ENCODE measurements at regions of chr15 and their contacts with region 1.

Region 1: DNA sequence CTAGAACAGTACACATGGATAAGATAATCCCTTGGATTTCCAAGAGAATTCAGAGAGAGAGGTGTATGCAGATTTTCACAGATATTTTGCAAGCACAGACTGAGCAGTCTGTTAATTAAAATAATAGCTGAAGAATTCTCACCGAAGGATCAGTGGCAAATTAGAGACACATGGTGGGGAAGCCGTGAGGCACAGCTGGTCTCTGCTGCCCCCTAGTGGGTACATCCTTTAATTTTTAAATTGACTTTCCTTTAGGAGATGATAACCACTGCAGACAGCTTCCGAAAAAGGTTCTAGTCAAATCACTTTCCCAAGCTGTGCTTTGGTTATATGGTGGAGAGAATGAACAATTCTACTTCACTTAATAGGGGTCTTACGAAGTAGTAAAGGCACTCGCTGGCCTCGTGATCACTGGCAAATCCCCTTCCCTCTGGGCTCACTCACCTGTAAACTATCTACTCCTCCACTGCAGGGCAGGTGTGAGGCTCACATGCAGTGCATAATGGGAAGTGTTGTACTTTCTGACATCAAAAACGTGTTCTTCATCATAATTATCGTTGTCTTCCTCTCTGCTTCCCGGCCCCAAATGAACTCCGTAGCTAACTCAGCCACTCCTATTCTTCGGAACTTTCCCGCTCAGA is 19.5 kb downstream of the MESD start:
- DNase-seq: no peak
- H3K4me3 ChIP-seq: no peak overlapping the region
- H3K27me3 ChIP-seq: no peaks in the 10 kb centered on the region
- CTCF ChIP-seq: peak; percentile 77

Region 2: GRCh38 chr15:80953936-80954778 is 16.0 kb before region 1 on chr15:
- CTCF ChIA-PET with region 1: interaction called, 51 read pairs
- POLR2A ChIA-PET with region 1: no interaction called
- DNase-seq: no peak
- H3K4me3 ChIP-seq: no peak overlapping the region
- H3K27me3 ChIP-seq: no peaks in the 10 kb centered on the region
- CTCF ChIP-seq: 0 out of 2 replicates have a peak, but pooled peaks have one; percentile 9

Region 3: GRCh38 chr15:80989518-80990478 is 19.7 kb after region 1 on chr15 and contains the start of gene MESD:
- CTCF ChIA-PET with region 1: interaction called, 12 read pairs
- POLR2A ChIA-PET with region 1: no interaction called
- DNase-seq: peak; percentile 65
- H3K4me3 ChIP-seq: peak within 1 kb of the TSS; percentile 65
- H3K27me3 ChIP-seq: no peaks in the 10 kb centered on the region
- CTCF ChIP-seq: no peak
- polyA plus RNA-seq, gene MESD: 11.0 and 17.3 TPM in 2 replicates

Region 4: DNA sequence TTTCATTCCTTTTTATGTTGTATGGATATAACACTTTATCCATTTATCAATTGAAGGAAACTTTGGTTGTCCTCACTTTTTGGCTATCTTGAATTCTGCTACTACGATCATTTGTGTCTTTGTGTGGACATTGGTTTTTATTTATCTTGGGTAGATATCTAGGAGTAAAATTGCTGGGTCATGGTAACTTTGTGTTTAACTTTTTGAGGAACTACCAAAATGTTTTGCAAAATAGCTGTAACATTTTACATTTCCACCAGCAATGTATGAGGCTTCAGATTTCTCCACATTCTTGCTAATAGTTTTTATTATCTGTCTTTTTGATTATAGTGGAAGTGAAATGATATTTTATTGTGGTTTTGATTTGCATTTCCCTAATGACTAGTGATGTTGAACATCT is 86.2 kb after region 1 on chr15:
- CTCF ChIA-PET with region 1: no interaction called
- POLR2A ChIA-PET with region 1: no interaction called
- DNase-seq: no peak
- H3K4me3 ChIP-seq: no peak overlapping the region
- H3K27me3 ChIP-seq: no peaks in the 10 kb centered on the region
- CTCF ChIP-seq: no peak

Region 5: GRCh38 chr15:81106560-81106959 is 136.4 kb after region 1 on chr15:
- CTCF ChIA-PET with region 1: no interaction called
- POLR2A ChIA-PET with region 1: no interaction called
- DNase-seq: peak; percentile 16
- H3K4me3 ChIP-seq: no peak overlapping the region
- H3K27me3 ChIP-seq: peaks cover 4% of the 10 kb centered on the region; the same call in 1 of the 2 replicates
- CTCF ChIP-seq: peak; percentile 72